ENCODE measurements at regions of chr18 and their contacts with region 1.

Region 1: DNA sequence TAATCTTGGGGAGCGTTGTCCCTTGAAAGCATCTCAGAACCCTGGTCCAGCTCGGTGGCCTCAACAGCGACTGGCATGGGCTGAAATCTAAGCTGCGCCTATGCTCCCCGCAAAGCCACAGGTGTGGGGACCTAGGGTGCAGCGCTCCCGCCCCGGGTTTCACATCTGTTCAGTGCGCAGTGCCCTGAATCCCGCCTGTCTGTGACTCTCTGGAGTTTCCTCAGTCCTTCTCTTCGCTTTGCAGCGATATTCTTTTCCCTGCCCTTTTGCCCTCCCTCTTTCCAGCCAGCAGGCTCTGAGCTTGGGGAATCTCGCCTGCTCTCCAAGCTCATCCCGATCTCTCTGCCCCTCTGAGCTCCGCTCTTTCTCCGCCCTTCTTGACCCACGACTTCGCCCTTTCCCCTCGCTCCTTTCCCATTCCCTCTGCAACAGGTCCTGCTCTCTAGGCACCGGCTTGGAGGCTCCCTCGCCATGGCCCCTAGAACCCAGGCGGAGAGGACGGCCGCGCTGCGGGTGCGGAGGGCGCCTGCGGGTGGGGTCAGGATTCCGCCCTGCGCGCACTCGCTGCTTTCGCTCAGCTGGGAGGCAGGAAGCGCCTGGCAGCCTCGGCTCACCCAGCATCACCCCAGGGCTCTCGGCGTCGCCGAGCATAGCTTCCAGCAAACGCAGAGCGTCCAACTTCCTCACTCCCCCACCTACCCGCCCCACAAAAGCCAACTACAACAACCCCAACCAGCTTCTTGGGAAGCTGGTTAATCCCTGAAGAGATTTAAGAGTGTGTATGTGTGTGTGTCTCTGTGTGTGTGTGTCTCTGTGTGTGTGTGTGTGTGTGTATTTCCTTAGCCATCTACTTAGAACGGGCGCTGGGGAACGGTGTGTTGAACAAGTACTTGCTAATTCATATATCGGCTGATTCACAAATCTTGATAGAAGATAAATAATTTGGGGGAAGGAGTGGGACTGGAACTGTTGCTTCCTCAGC is 1.1 kb downstream of the GRP start:
- DNase-seq: no peak
- H3K4me3 ChIP-seq: peak overlapping the region; percentile 86
- H3K27ac ChIP-seq: peak overlapping the region; percentile 90
- H3K4me1 ChIP-seq: peaks cover 40% of the 10 kb centered on the region
- H3K27me3 ChIP-seq: no peaks in the 10 kb centered on the region
- CTCF ChIP-seq: no peak

Region 2: DNA sequence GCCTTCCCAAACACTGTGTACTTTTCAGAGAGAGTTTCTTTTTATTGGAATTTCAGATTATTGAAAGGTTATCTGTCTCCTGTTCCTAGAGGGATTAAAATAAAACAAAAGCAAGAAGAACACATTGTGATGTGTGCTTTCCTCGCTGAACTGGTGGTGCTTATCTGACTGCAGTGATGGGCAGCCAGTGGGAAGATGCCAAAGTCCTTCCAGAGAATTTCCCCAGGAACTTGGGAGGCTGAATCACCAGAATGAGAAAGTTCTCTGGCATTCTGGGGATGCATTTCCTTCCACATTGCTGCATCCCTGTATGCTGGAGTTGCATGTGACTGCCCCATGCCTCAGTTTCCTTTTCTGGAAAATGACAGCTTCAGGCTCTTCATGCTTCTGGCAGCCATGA is 135.3 kb before region 1 on chr18:
- CTCF ChIA-PET with region 1: no interaction called
- POLR2A ChIA-PET with region 1: no interaction called
- intact Hi-C with region 1: loop called (anchors 5 kb)
- DNase-seq: no peak
- H3K4me3 ChIP-seq: no peak overlapping the region
- H3K27ac ChIP-seq: no peak overlapping the region
- H3K4me1 ChIP-seq: peaks cover 28% of the 10 kb centered on the region
- H3K27me3 ChIP-seq: no peaks in the 10 kb centered on the region
- CTCF ChIP-seq: no peak

Region 3: DNA sequence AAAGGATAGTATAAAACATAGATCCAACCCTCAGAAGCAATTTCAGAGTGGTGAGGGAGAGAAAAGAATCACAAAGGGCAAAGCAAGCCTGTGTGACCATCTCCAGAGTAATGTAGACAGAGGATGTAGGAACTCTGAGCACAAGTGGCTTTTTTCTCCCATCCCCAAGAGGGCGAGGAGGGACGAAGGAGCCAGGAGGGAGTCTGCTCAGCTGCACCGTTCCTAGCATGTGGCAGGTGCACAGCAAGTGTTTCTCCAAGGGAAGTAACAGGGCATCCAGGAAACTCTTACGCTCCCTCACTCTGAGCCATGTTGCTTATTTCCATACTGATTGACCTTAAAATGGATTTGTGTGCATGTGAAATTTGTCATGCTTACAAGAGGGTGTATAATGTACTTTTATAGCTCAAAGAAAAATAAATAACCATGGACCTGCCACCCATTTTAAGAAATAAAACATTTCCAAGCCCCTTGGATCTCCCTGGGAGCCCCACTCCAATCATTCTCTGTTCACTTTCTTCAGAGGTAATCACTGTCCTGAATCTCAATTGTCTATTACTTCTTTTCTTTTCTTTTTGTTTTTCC is 119.2 kb before region 1 on chr18:
- CTCF ChIA-PET with region 1: no interaction called
- POLR2A ChIA-PET with region 1: no interaction called
- intact Hi-C with region 1: loop called (anchors 5 kb)
- DNase-seq: peak; percentile 95
- H3K4me3 ChIP-seq: no peak overlapping the region
- H3K27ac ChIP-seq: peak overlapping the region; percentile 98
- H3K4me1 ChIP-seq: peaks cover 31% of the 10 kb centered on the region
- H3K27me3 ChIP-seq: no peaks in the 10 kb centered on the region
- CTCF ChIP-seq: no peak

Region 4: DNA sequence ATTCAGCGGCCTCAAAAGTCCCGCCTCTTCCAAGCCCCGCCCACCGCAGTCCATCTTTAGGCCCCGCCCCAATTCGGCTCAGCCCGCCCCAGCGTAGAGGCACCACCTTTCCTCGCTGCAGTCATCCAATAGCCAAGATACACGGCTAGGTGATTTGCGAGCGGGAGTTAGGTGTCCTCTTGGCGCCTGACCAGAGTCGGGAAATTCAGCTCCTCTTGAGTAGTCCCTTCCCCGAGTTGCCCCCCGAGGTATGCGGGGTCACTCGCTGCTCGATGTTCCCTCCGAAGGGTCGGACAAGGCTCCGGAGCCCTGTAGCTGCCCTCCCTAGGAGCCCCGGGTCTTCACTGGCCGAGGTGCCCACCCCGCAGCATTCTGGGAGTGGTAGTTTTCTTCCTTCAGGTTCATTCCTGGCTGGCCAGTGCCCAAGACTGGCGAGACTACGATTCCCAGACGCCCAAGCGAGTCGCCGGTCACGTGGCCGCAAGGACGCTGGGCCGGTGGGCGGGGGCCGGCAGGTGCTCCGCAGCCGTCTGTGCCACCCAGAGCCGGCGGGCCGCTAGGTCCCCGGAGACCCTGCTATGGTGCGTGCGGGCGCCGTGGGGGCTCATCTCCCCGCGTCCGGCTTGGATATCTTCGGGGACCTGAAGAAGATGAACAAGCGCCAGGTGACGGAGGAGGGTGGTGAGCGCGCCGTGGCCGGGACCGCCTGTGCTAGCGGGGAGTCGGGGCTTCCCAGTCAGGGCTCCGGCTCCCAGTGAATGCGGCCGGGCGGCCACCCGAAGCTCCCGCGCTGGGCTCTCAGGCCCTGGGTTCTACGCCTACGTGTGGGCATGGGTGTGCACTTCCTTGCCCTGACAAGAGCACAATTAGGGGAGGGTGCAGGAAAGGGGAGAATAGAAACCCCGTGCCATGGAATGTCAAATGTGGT is 81.4 kb before region 1 on chr18 and contains the start of gene SEC11C:
- CTCF ChIA-PET with region 1: no interaction called
- POLR2A ChIA-PET with region 1: interaction called, 3 read pairs
- intact Hi-C with region 1: loop called (anchors 5 kb)
- DNase-seq: peak; percentile 99
- H3K4me3 ChIP-seq: peak within 1 kb of the TSS; percentile 89
- H3K27ac ChIP-seq: peak within 1 kb of the TSS; percentile 93
- H3K4me1 ChIP-seq: peaks cover 33% of the 10 kb centered on the region
- H3K27me3 ChIP-seq: no peaks in the 10 kb centered on the region
- CTCF ChIP-seq: no peak
- total RNA-seq, gene SEC11C: 300 and 355 TPM in 2 replicates

Region 5: DNA sequence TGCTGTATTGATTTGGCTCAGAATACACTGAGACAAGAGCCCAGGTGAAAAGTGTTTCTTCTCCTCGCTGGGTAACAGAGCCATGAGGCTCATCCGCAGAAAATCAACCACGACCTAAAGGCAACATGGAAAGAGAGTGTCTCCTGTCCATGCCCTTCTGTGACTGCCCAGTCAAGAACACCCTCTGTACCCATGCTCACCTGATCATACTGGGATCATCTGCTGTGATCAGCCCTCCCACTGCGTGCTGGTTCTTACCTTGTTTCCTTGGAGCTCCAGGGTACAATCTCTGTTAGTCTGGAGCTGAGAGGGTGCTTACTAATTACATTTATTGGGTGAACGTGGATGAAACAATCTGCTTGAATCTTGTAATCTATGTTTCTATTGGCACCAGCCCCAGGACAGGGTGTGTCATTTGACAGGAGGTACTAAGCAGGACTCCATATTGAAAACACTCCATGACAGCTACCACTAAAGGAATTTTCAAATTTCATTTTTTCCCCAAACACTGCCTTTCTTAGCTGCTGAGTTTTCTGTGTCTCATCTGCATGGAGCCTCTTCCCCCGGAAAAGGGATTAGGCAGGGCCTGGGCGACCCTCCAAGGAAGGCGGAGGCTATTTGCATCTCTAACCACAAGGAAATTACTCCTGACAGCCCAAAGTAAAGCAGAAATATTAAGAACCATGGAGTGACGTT is 40.8 kb before region 1 on chr18:
- CTCF ChIA-PET with region 1: no interaction called
- POLR2A ChIA-PET with region 1: interaction called, 14 read pairs
- intact Hi-C with region 1: no loop called
- DNase-seq: peak; percentile 92
- H3K4me3 ChIP-seq: peak overlapping the region; percentile 5
- H3K27ac ChIP-seq: peak overlapping the region; percentile 84
- H3K4me1 ChIP-seq: peaks cover 32% of the 10 kb centered on the region
- H3K27me3 ChIP-seq: no peaks in the 10 kb centered on the region
- CTCF ChIP-seq: no peak